ENCODE measurements at regions of chr11 and their contacts with region 1.

Region 1: GRCh38 chr11:11022125-11022730 is 164.4 kb upstream of the ZBED5 start:
- DNase-seq: no peak

Region 2: GRCh38 chr11:10792398-10792975 is 229.7 kb before region 1 on chr11:
- intact Hi-C with region 1: loop called (anchors 2 kb)
- DNase-seq: peak; percentile 94

Region 3: GRCh38 chr11:11089805-11090204 is 67.6 kb after region 1 on chr11:
- intact Hi-C with region 1: no loop called
- DNase-seq: no peak

Measured in cardiac septum (tissue), 1 donor.